ENCODE measurements at regions of chr18 and their contacts with region 1.

Region 1: GRCh38 chr18:21851327-21851972 is 110.9 kb downstream of the MIB1 start:
- DNase-seq: peak; percentile 31
- ATAC-seq: no peak; the same call in 1 of the 2 replicates
- H3K4me3 ChIP-seq: no peak overlapping the region
- H3K27ac ChIP-seq: no peak overlapping the region
- H3K4me1 ChIP-seq: no peaks in the 10 kb centered on the region
- H3K27me3 ChIP-seq: no peaks in the 10 kb centered on the region
- CTCF ChIP-seq: peak; percentile 47

Region 2: DNA sequence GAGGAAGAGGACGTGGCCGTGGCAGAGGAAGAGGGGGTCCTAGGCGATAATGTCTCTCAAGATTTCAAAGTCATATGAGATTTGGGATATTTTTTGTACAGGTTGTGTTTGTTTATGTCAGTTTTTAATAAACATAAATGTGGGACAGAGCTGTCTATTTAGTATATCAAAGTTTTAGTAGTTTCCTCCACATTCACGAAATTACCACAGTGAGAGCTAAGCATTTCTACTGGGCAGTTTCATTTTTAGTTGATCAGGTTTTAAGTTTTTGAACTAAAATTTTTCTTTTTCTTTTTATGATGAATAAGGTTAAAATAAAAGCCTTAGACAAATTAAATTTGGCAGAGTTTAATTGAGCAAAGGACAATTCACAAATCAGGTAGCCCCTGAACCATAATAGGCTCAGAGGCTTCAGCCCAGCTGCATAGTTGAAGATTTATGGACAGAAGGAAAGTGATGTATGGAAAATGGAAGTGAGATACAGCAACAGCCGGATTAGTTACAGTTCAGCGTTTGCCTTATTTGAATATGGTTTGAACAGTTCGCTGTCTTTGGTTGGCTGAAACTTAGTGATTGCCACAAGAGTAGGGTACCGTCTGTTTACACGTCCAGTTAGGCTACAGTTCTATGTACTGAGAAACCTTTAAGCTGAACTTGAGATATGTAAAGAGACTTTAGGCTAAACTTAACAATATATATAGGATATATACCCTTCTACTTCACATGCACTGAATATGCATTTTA is 222.2 kb before region 1 on chr18:
- CTCF ChIA-PET with region 1: interaction called, 3 read pairs
- POLR2A ChIA-PET with region 1: no interaction called
- intact Hi-C with region 1: loop called (anchors 2 kb)
- DNase-seq: no peak
- ATAC-seq: no peak
- H3K4me3 ChIP-seq: no peak overlapping the region
- H3K27ac ChIP-seq: no peak overlapping the region
- H3K4me1 ChIP-seq: no peaks in the 10 kb centered on the region
- H3K27me3 ChIP-seq: no peaks in the 10 kb centered on the region
- CTCF ChIP-seq: no peak

Region 3: DNA sequence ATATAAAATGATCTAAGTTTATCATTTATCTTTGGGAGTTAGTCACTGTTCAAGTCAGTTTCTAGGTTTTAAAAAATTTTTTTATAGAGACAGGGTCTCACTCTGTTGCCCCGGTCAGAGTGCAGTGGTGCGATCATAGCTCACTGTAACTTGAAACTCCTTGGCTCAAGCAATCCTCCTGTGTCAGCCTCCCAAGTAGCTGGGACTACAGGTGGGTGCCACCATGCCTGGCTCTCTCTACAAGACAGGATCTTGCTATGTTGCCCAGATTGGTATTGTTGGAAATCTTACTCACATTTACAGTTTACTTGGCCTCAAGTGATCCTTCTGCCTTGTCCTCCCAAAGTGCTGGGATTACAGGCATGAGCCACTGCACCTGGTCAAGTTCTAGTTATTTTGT is 36.3 kb before region 1 on chr18:
- CTCF ChIA-PET with region 1: no interaction called
- POLR2A ChIA-PET with region 1: no interaction called
- intact Hi-C with region 1: loop called (anchors 5 kb)
- DNase-seq: no peak
- ATAC-seq: no peak
- H3K4me3 ChIP-seq: no peak overlapping the region
- H3K27ac ChIP-seq: no peak overlapping the region
- H3K4me1 ChIP-seq: 0 out of 2 replicates have a peak, but pooled peaks cover 9% of the 10 kb centered on the region
- H3K27me3 ChIP-seq: no peaks in the 10 kb centered on the region
- CTCF ChIP-seq: no peak

Region 4: GRCh38 chr18:22052405-22053105 is 201.1 kb after region 1 on chr18:
- CTCF ChIA-PET with region 1: no interaction called
- POLR2A ChIA-PET with region 1: no interaction called
- intact Hi-C with region 1: no loop called
- DNase-seq: no peak
- ATAC-seq: no peak
- H3K4me3 ChIP-seq: no peak overlapping the region
- H3K27ac ChIP-seq: no peak overlapping the region
- H3K4me1 ChIP-seq: peaks cover 4% of the 10 kb centered on the region; the same call in 1 of the 2 replicates
- H3K27me3 ChIP-seq: no peaks in the 10 kb centered on the region
- CTCF ChIP-seq: no peak